ENCODE measurements at regions of chr3 and their contacts with region 1.

Region 1: DNA sequence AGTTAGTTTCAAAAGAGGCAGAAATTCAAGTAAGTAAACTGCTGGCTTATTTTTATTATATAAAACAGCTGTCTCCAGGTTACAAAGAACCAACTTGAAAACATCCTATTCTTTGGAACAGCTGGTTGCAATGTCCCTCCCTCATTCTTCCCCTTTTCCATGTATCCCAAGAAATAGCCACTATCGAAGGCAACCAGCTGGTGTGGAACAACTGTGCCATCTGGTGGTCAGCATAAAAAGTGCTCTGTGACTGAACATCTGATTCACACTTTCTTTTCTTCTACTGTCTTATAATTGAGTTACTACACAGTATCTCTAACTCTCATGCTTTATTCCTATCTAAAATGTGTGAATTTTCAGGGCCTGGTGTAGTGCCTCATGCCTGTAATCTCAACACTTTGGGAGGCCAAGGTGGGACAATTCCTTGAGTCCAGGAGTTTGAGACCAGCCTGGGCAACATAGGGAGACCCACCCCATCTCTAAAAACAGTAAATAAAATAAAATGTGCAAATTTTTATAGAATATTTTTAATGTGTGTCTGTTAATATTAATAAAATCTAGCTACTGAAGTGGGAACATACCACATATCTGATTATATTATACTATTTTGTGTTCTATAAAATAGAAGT is 9.6 kb downstream of the OSBPL11 start:
- DNase-seq: peak; percentile 66
- H3K4me3 ChIP-seq: no peak overlapping the region
- H3K27ac ChIP-seq: no peak overlapping the region
- H3K27me3 ChIP-seq: no peaks in the 10 kb centered on the region
- CTCF ChIP-seq: peak; percentile 94

Region 2: GRCh38 chr3:124928333-124929202 is 657.1 kb before region 1 on chr3:
- CTCF ChIA-PET with region 1: interaction called, 19 read pairs
- POLR2A ChIA-PET with region 1: no interaction called
- DNase-seq: peak; percentile 44
- H3K4me3 ChIP-seq: no peak overlapping the region
- H3K27ac ChIP-seq: no peak overlapping the region
- H3K27me3 ChIP-seq: peaks cover 5% of the 10 kb centered on the region
- CTCF ChIP-seq: peak; percentile 83

Region 3: GRCh38 chr3:124995460-124995994 is 590.2 kb before region 1 on chr3:
- CTCF ChIA-PET with region 1: interaction called, 12 read pairs
- POLR2A ChIA-PET with region 1: no interaction called
- DNase-seq: no peak
- H3K4me3 ChIP-seq: no peak overlapping the region
- H3K27ac ChIP-seq: peak overlapping the region; percentile 21
- H3K27me3 ChIP-seq: no peaks in the 10 kb centered on the region
- CTCF ChIP-seq: peak; percentile 54

Region 4: GRCh38 chr3:125556314-125556713 is 29.4 kb before region 1 on chr3:
- CTCF ChIA-PET with region 1: interaction called, 18 read pairs
- POLR2A ChIA-PET with region 1: interaction called, 3 read pairs
- DNase-seq: peak; percentile 66
- H3K4me3 ChIP-seq: no peak overlapping the region
- H3K27ac ChIP-seq: peak overlapping the region; percentile 32
- H3K27me3 ChIP-seq: no peaks in the 10 kb centered on the region
- CTCF ChIP-seq: no peak